ENCODE measurements at regions of chr2 and their contacts with region 1.

Region 1: DNA sequence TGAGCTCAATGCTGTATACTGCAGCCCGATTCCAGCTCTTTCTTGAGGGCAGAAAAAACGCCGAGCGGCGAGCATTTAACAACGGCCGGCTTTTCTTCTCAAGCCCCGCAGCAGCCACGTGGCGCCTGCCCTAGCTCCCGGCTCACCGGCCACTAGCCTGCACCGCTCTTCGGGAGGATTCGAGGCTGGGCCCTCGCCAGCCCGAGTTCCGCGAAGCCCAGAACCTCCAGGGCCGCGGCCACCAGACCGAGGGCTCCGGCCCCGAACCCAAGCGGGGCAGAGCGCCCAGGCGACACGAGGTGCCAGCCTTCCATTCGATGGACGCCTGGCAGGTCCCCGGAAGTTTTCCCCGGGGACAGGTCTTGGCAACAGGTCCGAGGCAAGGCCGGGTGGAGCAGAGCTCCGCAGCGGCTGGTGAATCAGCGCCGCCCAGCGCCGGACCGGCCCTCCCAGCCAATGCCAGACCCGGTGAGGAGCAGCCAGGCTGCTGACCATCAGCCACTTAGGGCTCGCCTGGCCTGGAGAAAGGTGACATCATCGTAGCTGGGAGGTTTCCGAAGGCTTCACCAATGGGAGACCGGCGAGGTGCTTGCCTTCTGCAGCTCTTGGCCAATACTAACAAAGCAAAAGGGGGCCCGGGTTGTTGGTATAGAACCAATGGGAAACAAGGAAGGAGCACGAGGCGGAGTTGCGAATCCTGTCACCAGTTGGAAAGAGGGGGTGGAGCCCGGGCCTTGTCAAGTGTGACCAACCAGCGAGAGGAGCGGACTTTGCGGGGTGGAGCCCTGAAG is 544 bp upstream of the MXD1 start:
- DNase-seq: peak; percentile 100
- ATAC-seq: peak; percentile 93
- H3K4me3 ChIP-seq: peak overlapping the region; percentile 68
- H3K27ac ChIP-seq: peak overlapping the region; percentile 86
- H3K4me1 ChIP-seq: peaks cover 8% of the 10 kb centered on the region; the same call in 1 of the 2 replicates
- H3K27me3 ChIP-seq: no peaks in the 10 kb centered on the region
- CTCF ChIP-seq: peak in 1 of 3 experiments; percentile 48; a peak in 2 of 6 replicates
- EP300 ChIP-seq: no peak
- POLR2A ChIP-seq: peak; percentile 85
- RAD21 ChIP-seq: 0 out of 2 replicates have a peak, but pooled peaks have one; percentile 1

Region 2: GRCh38 chr2:69902213-69902922 is 12.0 kb before region 1 on chr2:
- CTCF ChIA-PET with region 1: interaction called, 10 read pairs
- POLR2A ChIA-PET with region 1: interaction called, 12 read pairs
- RAD21 ChIA-PET with region 1: interaction called, 6 read pairs
- SMC1A ChIA-PET with region 1: interaction called, 15 read pairs
- in situ Hi-C with region 1: no loop called
- intact Hi-C with region 1: no loop called
- DNase-seq: peak; percentile 21
- ATAC-seq: peak; percentile 67
- H3K4me3 ChIP-seq: peak overlapping the region; percentile 71
- H3K27ac ChIP-seq: peak overlapping the region; percentile 60
- H3K4me1 ChIP-seq: peaks cover 4% of the 10 kb centered on the region; the same call in 1 of the 2 replicates
- H3K27me3 ChIP-seq: no peaks in the 10 kb centered on the region
- CTCF ChIP-seq: no peak
- EP300 ChIP-seq: no peak
- POLR2A ChIP-seq: no peak
- RAD21 ChIP-seq: no peak

Region 3: GRCh38 chr2:70078384-70078783 is 164.0 kb after region 1 on chr2:
- CTCF ChIA-PET with region 1: interaction called, 42 read pairs
- POLR2A ChIA-PET with region 1: interaction called, 75 read pairs
- RAD21 ChIA-PET with region 1: interaction called, 154 read pairs
- SMC1A ChIA-PET with region 1: interaction called, 126 read pairs
- in situ Hi-C with region 1: loop called (anchors 5 kb)
- intact Hi-C with region 1: no loop called
- DNase-seq: no peak
- ATAC-seq: peak; percentile 30; the same call in 1 of the 3 replicates
- H3K4me3 ChIP-seq: no peak overlapping the region
- H3K27ac ChIP-seq: peak overlapping the region; percentile 32; the same call in 1 of the 2 replicates
- H3K4me1 ChIP-seq: peaks cover 12% of the 10 kb centered on the region
- H3K27me3 ChIP-seq: no peaks in the 10 kb centered on the region
- CTCF ChIP-seq: no peak
- EP300 ChIP-seq: no peak
- POLR2A ChIP-seq: no peak
- RAD21 ChIP-seq: no peak

Region 4: DNA sequence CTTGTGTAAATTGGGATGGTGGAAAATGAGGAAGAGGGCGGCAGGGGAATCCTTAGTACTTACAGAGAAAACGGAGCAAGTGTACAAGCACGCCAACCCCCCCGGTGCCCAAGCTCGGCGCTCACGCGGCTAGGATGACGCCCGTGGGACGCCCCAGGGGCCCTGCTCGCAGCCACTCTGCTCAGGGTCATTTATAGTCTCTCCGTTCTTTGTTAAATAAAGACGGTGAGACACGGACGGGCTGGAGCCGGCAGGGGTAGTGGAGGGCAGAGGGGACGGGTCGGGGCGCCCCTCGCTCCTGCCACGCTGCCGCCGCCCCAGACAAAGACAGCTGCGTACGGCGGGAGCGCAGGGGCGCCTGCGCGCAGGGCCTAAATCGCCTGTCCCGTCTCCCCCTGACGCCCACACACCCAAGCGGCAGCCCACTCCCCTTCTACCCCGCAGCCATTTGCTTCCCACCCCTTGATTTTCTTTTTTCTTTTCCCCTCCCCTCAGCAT is 210.7 kb after region 1 on chr2:
- CTCF ChIA-PET with region 1: interaction called, 5 read pairs
- POLR2A ChIA-PET with region 1: interaction called, 7 read pairs
- RAD21 ChIA-PET with region 1: interaction called, 16 read pairs
- SMC1A ChIA-PET with region 1: interaction called, 21 read pairs
- in situ Hi-C with region 1: no loop called
- intact Hi-C with region 1: no loop called
- DNase-seq: no peak
- ATAC-seq: peak; percentile 61
- H3K4me3 ChIP-seq: peak overlapping the region; percentile 67
- H3K27ac ChIP-seq: peak overlapping the region; percentile 95
- H3K4me1 ChIP-seq: peaks cover 62% of the 10 kb centered on the region
- H3K27me3 ChIP-seq: no peaks in the 10 kb centered on the region
- CTCF ChIP-seq: no peak
- EP300 ChIP-seq: no peak; a peak in 1 of 4 replicates
- POLR2A ChIP-seq: peak; percentile 88
- RAD21 ChIP-seq: no peak

Region 5: DNA sequence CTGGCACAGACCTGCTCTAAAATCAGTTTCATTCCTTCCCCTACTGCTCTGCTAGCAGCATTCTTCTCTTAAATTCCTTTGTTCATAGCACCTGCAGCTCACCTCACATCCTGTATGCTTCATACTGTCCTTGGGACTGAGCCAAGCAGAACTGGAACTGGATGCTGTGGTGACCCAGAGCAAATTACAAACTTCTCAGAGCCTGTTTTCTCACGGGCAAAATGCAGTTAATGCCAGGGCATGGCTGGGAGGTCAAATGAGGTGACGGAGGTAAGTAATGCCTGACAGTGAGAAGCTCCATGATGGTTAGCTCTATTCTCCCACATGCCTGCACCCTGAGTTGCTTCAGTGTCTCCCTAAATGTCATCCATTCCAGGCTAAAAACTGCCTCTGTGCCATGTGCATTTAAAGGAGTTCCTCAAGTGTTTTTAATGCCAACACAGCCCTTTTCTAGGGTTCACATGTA is 246.7 kb after region 1 on chr2:
- CTCF ChIA-PET with region 1: interaction called, 10 read pairs
- POLR2A ChIA-PET with region 1: interaction called, 3 read pairs
- RAD21 ChIA-PET with region 1: interaction called, 12 read pairs
- SMC1A ChIA-PET with region 1: interaction called, 15 read pairs
- in situ Hi-C with region 1: no loop called
- intact Hi-C with region 1: loop called (anchors 5 kb)
- DNase-seq: peak; percentile 99
- ATAC-seq: peak; percentile 95
- H3K4me3 ChIP-seq: no peak overlapping the region; the same call in 1 of the 2 replicates
- H3K27ac ChIP-seq: peak overlapping the region; percentile 78
- H3K4me1 ChIP-seq: peaks cover 18% of the 10 kb centered on the region
- H3K27me3 ChIP-seq: no peaks in the 10 kb centered on the region
- CTCF ChIP-seq: no peak
- EP300 ChIP-seq: peak; percentile 56 to 86; a peak in 3 of 4 replicates
- POLR2A ChIP-seq: no peak
- RAD21 ChIP-seq: no peak

Region 6: GRCh38 chr2:70301344-70302194 is 387.2 kb after region 1 on chr2 and contains the start of gene FAM136A:
- CTCF ChIA-PET with region 1: interaction called, 97 read pairs
- POLR2A ChIA-PET with region 1: no interaction called
- RAD21 ChIA-PET with region 1: interaction called, 17 read pairs
- SMC1A ChIA-PET with region 1: interaction called, 32 read pairs
- in situ Hi-C with region 1: no loop called
- intact Hi-C with region 1: loop called (anchors 1 kb)
- DNase-seq: peak; percentile 40
- ATAC-seq: peak; percentile 93
- H3K4me3 ChIP-seq: peak within 1 kb of the TSS; percentile 84
- H3K27ac ChIP-seq: peak within 1 kb of the TSS; percentile 85
- H3K4me1 ChIP-seq: peaks cover 3% of the 10 kb centered on the region; the same call in 1 of the 2 replicates
- H3K27me3 ChIP-seq: no peaks in the 10 kb centered on the region
- CTCF ChIP-seq: peak; percentile 88 to 97 (median 95)
- EP300 ChIP-seq: no peak
- POLR2A ChIP-seq: peak; percentile 82
- RAD21 ChIP-seq: peak; percentile 70
- polyA plus RNA-seq, gene FAM136A: 128 to 134 TPM

Region 7: DNA sequence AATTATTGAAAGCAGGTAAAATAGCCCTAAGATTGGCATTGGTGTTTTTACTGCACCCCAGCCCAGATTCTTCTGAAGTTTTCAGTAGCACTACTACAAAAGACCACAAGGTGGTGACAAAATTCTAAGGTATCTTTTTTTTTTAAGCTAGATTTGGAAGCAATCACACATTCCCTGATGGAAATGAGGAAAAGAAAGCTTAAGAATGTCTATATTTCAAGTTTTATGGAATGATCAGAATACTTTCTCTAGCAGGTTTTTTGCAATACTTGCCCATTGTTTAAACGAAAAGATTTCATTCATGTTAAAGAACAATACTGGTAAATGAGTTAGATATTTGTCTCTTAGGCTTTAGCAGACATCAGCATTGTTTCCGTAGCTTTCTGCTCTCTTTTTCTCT is 1385.1 kb after region 1 on chr2:
- CTCF ChIA-PET with region 1: no interaction called
- POLR2A ChIA-PET with region 1: no interaction called
- RAD21 ChIA-PET with region 1: no interaction called
- SMC1A ChIA-PET with region 1: no interaction called
- in situ Hi-C with region 1: no loop called
- intact Hi-C with region 1: no loop called
- DNase-seq: no peak
- ATAC-seq: peak; percentile 54
- H3K4me3 ChIP-seq: no peak overlapping the region
- H3K27ac ChIP-seq: no peak overlapping the region
- H3K4me1 ChIP-seq: no peaks in the 10 kb centered on the region
- H3K27me3 ChIP-seq: no peaks in the 10 kb centered on the region
- CTCF ChIP-seq: peak; percentile 65 to 68 (median 67); a peak in 5 of 6 replicates
- EP300 ChIP-seq: no peak
- POLR2A ChIP-seq: no peak
- RAD21 ChIP-seq: peak; percentile 72

Measured in GM12878 (cell line).